ENCODE measurements at regions of chr6 and their contacts with region 1.

Region 1: DNA sequence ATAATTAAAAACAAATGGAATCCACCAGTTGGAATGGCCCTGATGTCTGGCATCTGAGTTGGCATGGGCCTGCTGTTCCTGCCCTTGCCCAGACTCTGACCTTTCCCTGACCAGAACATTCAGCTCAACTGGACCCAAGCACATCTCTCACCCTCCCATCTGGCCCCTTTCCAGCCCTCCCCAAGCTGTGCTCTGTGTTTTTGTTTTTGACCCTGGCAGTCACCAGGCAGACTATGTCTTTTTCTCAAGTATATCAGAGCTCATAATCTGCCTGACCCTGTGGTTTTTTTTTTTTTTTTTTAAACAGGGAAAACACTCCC is 117.6 kb downstream of the TRDN start:
- DNase-seq: peak; percentile 76 to 92 (median 84)
- ATAC-seq: peak; percentile 94 to 96 (median 95)
- H3K4me3 ChIP-seq: peak overlapping the region in 4 of 12 donors; percentile 9 to 33 (median 28)
- H3K27ac ChIP-seq: peak overlapping the region; percentile 61 to 91 (median 81)
- H3K4me1 ChIP-seq: peaks cover 0 to 25% (median 14%) of the 10 kb centered on the region in 12 donors
- H3K27me3 ChIP-seq: no peaks in the 10 kb centered on the region
- CTCF ChIP-seq: no peak
- POLR2A ChIP-seq: no peak

Region 2: DNA sequence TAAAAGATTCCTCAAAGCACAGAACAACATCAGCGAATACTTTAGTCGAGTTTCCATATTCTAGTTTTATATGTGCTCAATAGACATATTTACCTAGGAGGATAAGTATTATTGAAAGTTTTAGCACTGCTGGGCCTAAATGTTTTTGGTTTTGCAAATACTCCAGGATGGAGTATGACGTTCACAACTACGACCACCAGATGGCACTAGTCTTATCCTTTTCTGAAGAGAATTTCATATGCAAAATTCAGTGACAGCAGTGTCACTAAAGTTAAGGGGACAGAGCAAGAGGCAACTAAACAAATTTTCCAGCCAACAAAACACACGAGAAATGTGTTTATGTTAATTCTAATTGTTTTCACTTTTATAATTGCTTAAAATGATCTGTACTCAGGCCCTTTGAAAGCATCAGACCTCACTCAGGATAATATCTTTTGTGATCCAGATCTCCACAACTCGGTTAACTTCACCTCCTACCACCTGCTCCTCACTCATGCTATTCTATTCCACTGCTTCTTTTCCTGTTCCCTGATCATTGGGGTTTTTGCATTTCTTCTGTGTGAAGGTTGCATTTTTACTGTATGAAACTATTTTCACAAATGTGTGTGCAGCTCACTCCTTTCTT is 103.2 kb before region 1 on chr6:
- intact Hi-C with region 1: loop called in 1 of 10 experiments (anchors 10 kb)
- DNase-seq: peak in 4 of 5 donors; percentile 19 to 52 (median 45)
- ATAC-seq: peak; percentile 47 to 76 (median 72)
- H3K4me3 ChIP-seq: no peak overlapping the region
- H3K27ac ChIP-seq: peak overlapping the region in 1 of 12 donors; percentile 22
- H3K4me1 ChIP-seq: peaks cover 0 to 11% (median 0%) of the 10 kb centered on the region in 12 donors
- H3K27me3 ChIP-seq: no peaks in the 10 kb centered on the region
- CTCF ChIP-seq: peak; percentile 55 to 73 (median 68)
- POLR2A ChIP-seq: no peak

Region 3: DNA sequence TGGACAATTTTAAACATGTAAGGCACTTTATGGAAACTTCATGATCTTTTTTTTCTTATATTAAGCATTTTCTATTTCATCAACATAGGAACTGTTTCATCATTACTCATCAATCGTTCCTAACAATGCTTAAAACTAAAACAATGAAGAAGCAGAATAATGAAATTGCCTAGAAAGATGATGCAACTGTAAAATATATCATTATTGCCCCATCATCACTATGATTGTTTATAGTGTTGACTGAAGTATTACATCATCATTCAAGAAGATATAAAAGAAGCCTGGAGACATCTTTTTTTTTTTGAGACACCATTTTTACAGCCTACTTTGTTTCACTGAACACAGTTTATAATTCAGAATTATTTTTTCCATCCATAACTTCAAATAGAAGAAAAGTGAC is 29.6 kb before region 1 on chr6:
- intact Hi-C with region 1: no loop called
- DNase-seq: no peak
- ATAC-seq: no peak
- H3K4me3 ChIP-seq: no peak overlapping the region
- H3K27ac ChIP-seq: no peak overlapping the region
- H3K4me1 ChIP-seq: no peaks in the 10 kb centered on the region
- H3K27me3 ChIP-seq: no peaks in the 10 kb centered on the region
- CTCF ChIP-seq: no peak
- POLR2A ChIP-seq: no peak

Region 4: GRCh38 chr6:123619156-123619555 is 100.0 kb after region 1 on chr6:
- intact Hi-C with region 1: loop called in 1 of 10 experiments (anchors 5 kb)
- DNase-seq: peak in 4 of 5 donors; percentile 25 to 54 (median 44)
- ATAC-seq: peak; percentile 55 to 85 (median 80)
- H3K4me3 ChIP-seq: no peak overlapping the region
- H3K27ac ChIP-seq: peak overlapping the region in 10 of 12 donors; percentile 2 to 64 (median 28)
- H3K4me1 ChIP-seq: peaks cover 0 to 32% (median 3%) of the 10 kb centered on the region in 12 donors
- H3K27me3 ChIP-seq: no peaks in the 10 kb centered on the region
- CTCF ChIP-seq: no peak
- POLR2A ChIP-seq: no peak

Region 5: GRCh38 chr6:123636782-123637181 is 117.6 kb after region 1 on chr6 and contains the start of gene TRDN:
- intact Hi-C with region 1: loop called in 5 of 10 experiments (anchors 1 to 10 kb)
- DNase-seq: peak in 3 of 5 donors; percentile 17 to 45 (median 38)
- ATAC-seq: peak; percentile 85 to 89 (median 88)
- H3K4me3 ChIP-seq: peak within 1 kb of the TSS; percentile 1 to 70 (median 54)
- H3K27ac ChIP-seq: peak within 1 kb of the TSS; percentile 77 to 97 (median 88)
- H3K4me1 ChIP-seq: peaks cover 0 to 22% (median 3%) of the 10 kb centered on the region in 12 donors
- H3K27me3 ChIP-seq: no peaks in the 10 kb centered on the region
- CTCF ChIP-seq: no peak
- POLR2A ChIP-seq: peak in 1 of 2 donors; percentile 33
- total RNA-seq, gene TRDN: 283 to 540 (median 381) TPM

Measured in heart left ventricle (tissue), 16 donors.